ENCODE measurements at regions of chr2 and their contacts with region 1.

Region 1: DNA sequence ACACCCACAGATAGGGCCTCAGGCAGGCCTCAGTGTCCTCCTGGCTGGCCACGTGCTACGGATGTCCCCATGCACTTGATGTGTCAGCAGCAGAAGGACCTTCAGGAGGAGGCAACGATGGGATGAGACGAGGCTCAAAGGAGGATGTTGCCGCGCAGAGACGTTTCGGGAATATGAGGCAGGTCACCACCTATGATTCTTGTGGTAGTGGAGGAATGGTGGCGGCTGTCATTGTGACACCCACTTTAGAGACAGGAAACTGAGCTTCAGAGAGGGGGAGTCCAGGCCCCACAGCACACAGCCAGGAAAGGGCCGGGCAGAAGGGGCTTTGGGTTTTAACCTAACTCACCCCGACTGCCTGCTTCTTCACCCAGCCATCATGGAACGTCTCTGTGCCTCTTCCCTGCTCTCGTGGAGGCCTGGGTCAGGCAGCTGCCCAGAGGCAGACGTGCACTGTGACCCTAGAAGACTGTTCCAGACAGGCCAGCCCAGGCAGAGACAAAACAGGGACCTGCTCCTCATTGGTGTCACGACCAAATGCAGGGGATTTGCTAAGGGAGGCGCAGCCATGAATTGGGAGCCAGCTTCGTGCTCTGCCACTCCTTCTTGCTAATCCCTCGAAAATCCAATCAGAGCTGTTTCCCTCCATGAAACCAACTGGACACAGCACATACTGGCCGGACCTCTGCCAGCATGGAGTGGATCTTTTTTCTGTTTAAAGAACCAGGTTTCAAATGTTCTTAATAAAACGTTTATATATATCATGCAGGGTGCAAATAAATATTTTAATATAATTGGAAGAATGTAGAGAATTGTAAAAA is 169.2 kb downstream of the ASB1 start:
- DNase-seq: no peak
- H3K4me3 ChIP-seq: no peak overlapping the region
- H3K27ac ChIP-seq: peak overlapping the region in 1 of 3 donors; percentile 87
- H3K4me1 ChIP-seq: peaks cover 20 to 26% of the 10 kb centered on the region in 2 donors
- H3K27me3 ChIP-seq: no peaks in the 10 kb centered on the region
- CTCF ChIP-seq: no peak
- POLR2A ChIP-seq: no peak

Region 2: GRCh38 chr2:238466243-238466756 is 129.7 kb before region 1 on chr2:
- intact Hi-C with region 1: no loop called
- DNase-seq: no peak
- H3K4me3 ChIP-seq: no peak overlapping the region
- H3K27ac ChIP-seq: no peak overlapping the region
- H3K4me1 ChIP-seq: no peaks in the 10 kb centered on the region
- H3K27me3 ChIP-seq: no peaks in the 10 kb centered on the region
- CTCF ChIP-seq: no peak
- POLR2A ChIP-seq: no peak

Region 3: GRCh38 chr2:238560234-238560633 is 35.7 kb before region 1 on chr2:
- intact Hi-C with region 1: loop called (anchors 2 kb)
- DNase-seq: no peak
- H3K4me3 ChIP-seq: no peak overlapping the region
- H3K27ac ChIP-seq: peak overlapping the region in 1 of 3 donors; percentile 81
- H3K4me1 ChIP-seq: peaks cover 9 to 22% of the 10 kb centered on the region in 2 donors
- H3K27me3 ChIP-seq: no peaks in the 10 kb centered on the region
- CTCF ChIP-seq: no peak
- POLR2A ChIP-seq: no peak